Activated CD8-positive, alpha-beta T cell treated with anti-CD3 and anti-CD28 coated beads for 36 hours (primary cell): ENCODE measurements at regions of chr17 and their contacts with region 1.

Region 1: DNA sequence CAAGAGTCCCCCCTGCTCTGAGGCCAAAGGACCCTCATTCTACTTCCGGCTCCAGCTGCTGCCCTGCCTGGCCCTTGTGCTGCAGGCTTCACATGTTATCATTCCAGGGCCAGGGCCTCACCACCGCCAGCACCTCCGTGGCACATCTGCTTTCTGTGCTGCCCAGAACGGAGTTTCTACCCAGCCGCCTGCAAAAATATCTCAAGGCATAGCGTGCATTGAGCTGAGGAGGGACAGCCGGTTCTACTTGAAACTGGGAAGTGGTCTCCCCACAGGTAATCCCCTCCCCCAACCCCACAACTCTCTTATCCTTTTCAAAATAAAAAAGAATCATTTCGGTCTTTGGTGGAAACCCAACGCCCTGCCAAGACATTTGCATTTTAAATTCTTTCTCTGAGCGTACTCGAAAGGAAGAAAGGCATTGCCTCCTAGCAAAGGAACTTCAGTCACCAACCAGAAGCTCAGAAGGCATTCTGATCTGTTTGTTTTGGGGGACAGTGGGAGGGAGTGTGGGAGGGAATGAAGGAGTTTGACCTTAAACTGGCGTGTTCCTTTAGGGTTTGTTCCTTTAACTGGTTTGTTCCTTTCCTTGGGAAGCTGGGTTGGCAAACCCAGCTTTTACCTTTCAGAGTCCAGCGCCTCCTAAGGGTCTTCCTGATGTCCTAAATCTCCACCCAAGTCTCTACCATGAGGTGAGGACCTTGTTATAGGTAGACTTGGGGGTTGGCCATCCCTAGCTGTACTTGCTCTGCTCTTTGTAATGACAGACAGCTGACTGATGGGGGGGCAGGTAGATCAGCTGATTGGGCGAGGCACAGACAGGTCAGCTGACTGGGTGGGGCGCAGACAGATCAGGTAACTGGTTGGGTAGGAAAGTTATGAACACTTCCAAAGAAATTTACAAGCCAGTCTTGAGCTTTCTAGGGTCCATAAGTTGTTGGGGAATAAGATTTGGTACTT is 33.4 kb upstream of the PIK3R6 start:
- DNase-seq: peak; percentile 65
- ATAC-seq: no peak
- H3K4me3 Mint-ChIP-seq: peak overlapping the region; percentile 42
- H3K27ac Mint-ChIP-seq: peak overlapping the region; percentile 91
- H3K4me1 Mint-ChIP-seq: peaks cover 67% of the 10 kb centered on the region
- H3K27me3 Mint-ChIP-seq: no peaks in the 10 kb centered on the region
- CTCF ChIP-seq: no peak

Region 2: GRCh38 chr17:8849311-8850041 is 51.4 kb before region 1 on chr17:
- CTCF ChIA-PET with region 1: no interaction called
- POLR2A ChIA-PET with region 1: no interaction called
- intact Hi-C with region 1: no loop called
- DNase-seq: no peak
- ATAC-seq: no peak
- H3K4me3 Mint-ChIP-seq: no peak overlapping the region
- H3K27ac Mint-ChIP-seq: no peak overlapping the region
- H3K4me1 Mint-ChIP-seq: peaks cover 6% of the 10 kb centered on the region
- H3K27me3 Mint-ChIP-seq: no peaks in the 10 kb centered on the region
- CTCF ChIP-seq: no peak

Region 3: DNA sequence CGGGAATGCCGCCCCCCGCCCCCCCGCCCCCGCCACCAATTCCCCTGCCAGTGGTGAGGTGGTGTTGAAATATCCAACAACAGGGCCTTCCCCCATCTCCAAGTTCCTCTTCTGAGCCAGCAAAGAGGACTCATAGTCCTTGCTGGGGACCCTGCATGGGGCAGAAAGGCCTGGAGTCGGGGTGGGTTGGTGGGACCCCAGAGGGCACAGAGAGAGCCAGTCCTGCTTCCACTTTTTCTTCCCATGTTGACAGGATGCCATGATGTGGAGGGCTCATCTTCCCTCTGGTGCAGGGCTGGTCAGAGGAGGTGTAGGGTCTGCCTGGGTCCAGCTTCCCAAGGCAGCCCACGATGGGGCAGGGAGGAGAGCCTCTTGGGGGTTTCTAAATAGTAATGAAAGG is 15.6 kb after region 1 on chr17:
- CTCF ChIA-PET with region 1: interaction called, 8 read pairs
- POLR2A ChIA-PET with region 1: interaction called, 38 read pairs
- intact Hi-C with region 1: no loop called
- DNase-seq: no peak
- ATAC-seq: no peak
- H3K4me3 Mint-ChIP-seq: no peak overlapping the region
- H3K27ac Mint-ChIP-seq: peak overlapping the region; percentile 76
- H3K4me1 Mint-ChIP-seq: peaks cover 44% of the 10 kb centered on the region
- H3K27me3 Mint-ChIP-seq: no peaks in the 10 kb centered on the region
- CTCF ChIP-seq: no peak

Region 4: GRCh38 chr17:8941520-8941919 is 40.6 kb after region 1 on chr17:
- CTCF ChIA-PET with region 1: interaction called, 19 read pairs
- POLR2A ChIA-PET with region 1: interaction called, 11 read pairs
- intact Hi-C with region 1: no loop called
- DNase-seq: peak; percentile 89
- ATAC-seq: peak; percentile 41
- H3K4me3 Mint-ChIP-seq: peak overlapping the region; percentile 67
- H3K27ac Mint-ChIP-seq: peak overlapping the region; percentile 96
- H3K4me1 Mint-ChIP-seq: peaks cover 87% of the 10 kb centered on the region
- H3K27me3 Mint-ChIP-seq: no peaks in the 10 kb centered on the region
- CTCF ChIP-seq: no peak

Region 5: GRCh38 chr17:8976638-8977037 is 75.7 kb after region 1 on chr17:
- CTCF ChIA-PET with region 1: no interaction called
- POLR2A ChIA-PET with region 1: no interaction called
- intact Hi-C with region 1: no loop called
- DNase-seq: no peak
- ATAC-seq: no peak
- H3K4me3 Mint-ChIP-seq: no peak overlapping the region
- H3K27ac Mint-ChIP-seq: no peak overlapping the region
- H3K4me1 Mint-ChIP-seq: peaks cover 6% of the 10 kb centered on the region
- H3K27me3 Mint-ChIP-seq: no peaks in the 10 kb centered on the region
- CTCF ChIP-seq: no peak

Region 6: DNA sequence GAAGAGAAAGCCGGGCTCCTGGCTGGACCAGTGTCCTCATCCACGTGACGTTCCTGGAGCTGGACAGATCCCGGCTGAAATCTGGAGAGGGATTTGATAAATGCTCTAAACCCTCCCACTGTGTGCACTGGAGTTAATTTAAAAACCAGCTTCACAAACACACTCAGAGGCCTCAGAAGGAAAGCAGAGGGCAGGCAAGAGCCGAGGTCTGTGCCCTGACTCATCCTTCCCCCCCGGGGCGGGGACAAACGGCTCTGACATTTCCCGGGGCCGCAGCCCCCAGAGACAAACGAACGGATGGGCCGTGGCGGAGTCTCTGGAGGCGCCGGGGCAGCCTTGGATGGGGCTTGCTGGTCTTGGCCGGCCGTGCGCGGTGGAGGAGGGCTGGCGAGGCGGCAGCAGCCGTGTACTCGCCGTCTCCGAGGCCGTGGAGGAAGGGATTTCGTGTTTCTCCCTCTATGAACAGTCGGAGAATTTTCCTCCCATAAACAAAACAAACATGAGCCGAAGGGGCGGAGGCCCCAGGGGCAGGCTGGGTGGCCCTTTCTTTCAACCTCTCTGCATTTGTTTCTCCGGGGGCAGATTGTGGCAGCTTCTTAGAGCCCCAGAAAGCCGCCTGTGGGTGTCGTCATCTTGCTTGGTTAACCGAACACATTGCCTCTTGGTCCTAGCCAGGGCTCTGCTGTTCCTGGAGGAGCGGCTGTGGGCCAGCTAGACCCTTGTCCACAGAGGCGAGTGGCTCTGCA is 214.7 kb after region 1 on chr17:
- CTCF ChIA-PET with region 1: no interaction called
- POLR2A ChIA-PET with region 1: no interaction called
- intact Hi-C with region 1: no loop called
- DNase-seq: peak; percentile 88
- ATAC-seq: peak; percentile 96
- H3K4me3 Mint-ChIP-seq: peak overlapping the region; percentile 68
- H3K27ac Mint-ChIP-seq: peak overlapping the region; percentile 78
- H3K4me1 Mint-ChIP-seq: peaks cover 18% of the 10 kb centered on the region
- H3K27me3 Mint-ChIP-seq: peaks cover 8% of the 10 kb centered on the region
- CTCF ChIP-seq: peak; percentile 49